Left lung (tissue), 14 donors: ENCODE measurements at regions of chr1 and their contacts with region 1.

Region 1: GRCh38 chr1:94854458-94855306 is 34.5 kb downstream of the SLC44A3 start:
- DNase-seq: peak; percentile 84 to 93 (median 89)
- ATAC-seq: peak; percentile 97
- H3K4me3 ChIP-seq: peak overlapping the region; percentile 12 to 34
- H3K27ac ChIP-seq: peak overlapping the region; percentile 80 to 81
- H3K4me1 ChIP-seq: peaks cover 4 to 17% of the 10 kb centered on the region in 2 donors
- H3K27me3 ChIP-seq: no peaks in the 10 kb centered on the region
- CTCF ChIP-seq: peak; percentile 85 to 87

Region 2: DNA sequence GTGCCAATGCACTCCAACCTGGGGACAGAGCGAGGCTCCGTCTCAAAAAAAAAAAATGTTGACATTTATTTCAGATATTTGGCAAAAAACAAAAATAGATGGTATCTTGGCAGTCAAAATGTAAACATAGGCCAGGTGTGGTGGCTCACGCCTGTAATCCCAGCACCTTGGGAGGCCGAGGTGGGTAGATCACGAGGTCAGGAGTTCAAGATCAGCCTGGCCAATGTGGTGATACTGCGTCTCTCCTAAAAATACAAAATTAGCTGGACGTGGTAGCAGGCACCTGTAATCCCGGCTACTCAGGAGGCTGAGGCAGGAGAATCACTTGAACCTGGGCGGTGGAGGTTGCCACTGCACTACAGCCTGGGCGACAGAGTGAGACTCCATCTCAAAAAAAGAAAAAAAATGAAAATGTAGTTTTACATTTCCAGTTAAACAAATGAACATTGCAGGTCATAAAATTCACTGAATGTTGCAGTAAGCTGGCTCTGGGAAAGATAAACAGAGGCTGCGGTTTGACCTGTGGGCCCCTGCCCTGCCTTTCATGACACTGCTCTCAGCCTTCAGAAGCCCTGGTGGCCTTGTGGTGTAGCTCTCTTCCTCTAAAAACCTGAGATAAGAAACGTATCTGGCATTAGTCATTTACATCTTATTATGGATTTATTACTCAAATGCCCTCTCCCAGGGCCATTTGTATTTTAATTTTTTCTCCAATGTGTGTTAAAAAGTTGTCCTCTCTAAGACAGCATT is 46.8 kb before region 1 on chr1:
- intact Hi-C with region 1: no loop called
- DNase-seq: no peak
- ATAC-seq: no peak
- H3K4me3 ChIP-seq: no peak overlapping the region
- H3K27ac ChIP-seq: no peak overlapping the region
- H3K4me1 ChIP-seq: peaks cover 0 to 13% of the 10 kb centered on the region in 2 donors
- H3K27me3 ChIP-seq: no peaks in the 10 kb centered on the region
- CTCF ChIP-seq: no peak

Region 3: GRCh38 chr1:94926915-94927404 is 72.3 kb after region 1 on chr1 and contains the start of gene CNN3:
- intact Hi-C with region 1: loop called in 1 of 2 experiments (anchors 5 kb)
- DNase-seq: peak; percentile 90 to 96 (median 92)
- ATAC-seq: peak; percentile 87
- H3K4me3 ChIP-seq: peak within 1 kb of the TSS; percentile 70 to 72
- H3K27ac ChIP-seq: peak within 1 kb of the TSS; percentile 96 to 99
- H3K4me1 ChIP-seq: peaks cover 32 to 36% of the 10 kb centered on the region in 2 donors
- H3K27me3 ChIP-seq: peaks cover 0 to 60% of the 10 kb centered on the region in 2 donors
- CTCF ChIP-seq: no peak
- polyA plus RNA-seq, gene CNN3: 265 to 326 (median 277) TPM

Region 4: GRCh38 chr1:94947437-94947836 is 92.8 kb after region 1 on chr1:
- intact Hi-C with region 1: no loop called
- DNase-seq: peak in 1 of 4 donors; percentile 30
- ATAC-seq: peak; percentile 74
- H3K4me3 ChIP-seq: no peak overlapping the region
- H3K27ac ChIP-seq: peak overlapping the region in 1 of 2 donors; percentile 62
- H3K4me1 ChIP-seq: peaks cover 0 to 5% of the 10 kb centered on the region in 2 donors
- H3K27me3 ChIP-seq: no peaks in the 10 kb centered on the region
- CTCF ChIP-seq: no peak

Region 5: DNA sequence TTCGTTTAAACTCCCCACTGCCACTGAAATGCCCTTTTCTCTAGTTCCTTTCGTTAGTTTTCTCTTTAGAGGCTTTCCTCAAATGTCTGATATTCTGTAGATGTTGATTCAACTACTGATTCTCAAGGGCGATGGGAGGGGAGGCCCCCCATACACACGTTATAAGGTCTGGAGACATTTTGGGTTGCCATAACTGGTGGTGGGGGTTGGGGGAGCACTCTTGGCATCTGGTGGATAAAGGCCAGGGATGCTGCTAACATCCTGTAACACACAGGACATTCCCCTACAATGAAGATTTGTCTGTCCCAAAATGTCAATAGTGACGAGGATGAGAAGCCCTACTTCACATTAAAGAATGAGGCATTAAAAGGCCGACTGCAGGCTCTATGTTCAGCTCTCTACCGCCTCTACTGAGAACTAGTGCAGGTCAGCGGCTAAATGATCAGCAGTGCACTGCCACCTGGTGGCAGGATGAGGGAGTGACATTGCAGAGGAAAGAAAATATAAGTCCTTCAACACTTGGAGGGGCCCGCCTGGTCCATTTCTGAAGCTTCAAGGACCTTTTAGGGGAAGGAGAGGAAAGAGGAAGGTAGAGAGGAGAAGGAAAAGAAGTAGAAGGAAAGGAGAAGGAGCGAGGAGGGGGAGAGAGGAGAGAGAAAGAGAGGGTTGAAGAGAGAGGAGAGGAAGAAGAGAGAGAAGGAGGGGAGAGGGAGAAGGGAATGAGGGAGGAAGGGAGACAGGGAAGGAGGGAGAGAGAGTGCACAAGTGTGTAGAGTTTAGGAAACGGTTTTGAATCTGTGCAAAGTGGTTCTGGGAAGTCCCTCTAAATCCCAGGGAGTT is 188.7 kb after region 1 on chr1:
- intact Hi-C with region 1: loop called in 1 of 2 experiments (anchors 2 kb)
- DNase-seq: peak; percentile 81 to 93 (median 84)
- ATAC-seq: peak; percentile 97
- H3K4me3 ChIP-seq: no peak overlapping the region
- H3K27ac ChIP-seq: peak overlapping the region; percentile 51 to 78
- H3K4me1 ChIP-seq: peaks cover 0 to 28% of the 10 kb centered on the region in 2 donors
- H3K27me3 ChIP-seq: no peaks in the 10 kb centered on the region
- CTCF ChIP-seq: peak; percentile 89 to 99